CD4-positive, alpha-beta memory T cell (primary cell): ENCODE measurements at regions of chr11 and their contacts with region 1.

Region 1: GRCh38 chr11:123407130-123407995 is 22.7 kb upstream of the GRAMD1B start:
- DNase-seq: peak; percentile 60 to 72 (median 68)
- H3K4me3 ChIP-seq: no peak overlapping the region
- H3K4me3 Mint-ChIP-seq: peak overlapping the region in 1 of 8 donors; percentile 60
- H3K27ac ChIP-seq: no peak overlapping the region
- H3K27ac Mint-ChIP-seq: peak overlapping the region in 1 of 7 donors; percentile 43
- H3K4me1 ChIP-seq: no peaks in the 10 kb centered on the region
- H3K4me1 Mint-ChIP-seq: peaks cover 0 to 3% (median 0%) of the 10 kb centered on the region in 4 donors
- H3K27me3 ChIP-seq: no peaks in the 10 kb centered on the region
- H3K27me3 Mint-ChIP-seq: peaks cover 2 to 8% of the 10 kb centered on the region in 2 donors

Region 2: GRCh38 chr11:123391646-123392348 is 15.6 kb before region 1 on chr11:
- CTCF ChIA-PET with region 1: interaction called, 26 read pairs
- POLR2A ChIA-PET with region 1: no interaction called
- intact Hi-C with region 1: no loop called
- DNase-seq: no peak
- H3K4me3 ChIP-seq: no peak overlapping the region
- H3K4me3 Mint-ChIP-seq: no peak overlapping the region
- H3K27ac ChIP-seq: no peak overlapping the region
- H3K27ac Mint-ChIP-seq: peak overlapping the region in 2 of 7 donors; percentile 49 to 66
- H3K4me1 ChIP-seq: no peaks in the 10 kb centered on the region
- H3K4me1 Mint-ChIP-seq: no peaks in the 10 kb centered on the region
- H3K27me3 ChIP-seq: no peaks in the 10 kb centered on the region
- H3K27me3 Mint-ChIP-seq: peaks cover 0 to 3% of the 10 kb centered on the region in 2 donors

Region 3: GRCh38 chr11:123429913-123430720 is 22.8 kb after region 1 on chr11 and contains the start of gene GRAMD1B:
- CTCF ChIA-PET with region 1: interaction called, 172 read pairs
- POLR2A ChIA-PET with region 1: interaction called, 17 read pairs
- intact Hi-C with region 1: loop called (anchors 1 kb)
- DNase-seq: peak; percentile 79 to 84 (median 81)
- H3K4me3 ChIP-seq: peak within 1 kb of the TSS; percentile 69 to 84
- H3K4me3 Mint-ChIP-seq: peak within 1 kb of the TSS; percentile 90 to 98 (median 92)
- H3K27ac ChIP-seq: peak within 1 kb of the TSS; percentile 67
- H3K27ac Mint-ChIP-seq: peak within 1 kb of the TSS; percentile 86 to 96 (median 92)
- H3K4me1 ChIP-seq: peaks cover 24% of the 10 kb centered on the region
- H3K4me1 Mint-ChIP-seq: peaks cover 20 to 55% (median 35%) of the 10 kb centered on the region in 4 donors
- H3K27me3 ChIP-seq: no peaks in the 10 kb centered on the region
- H3K27me3 Mint-ChIP-seq: peaks cover 0 to 2% of the 10 kb centered on the region in 2 donors
- total RNA-seq, gene GRAMD1B: 19.5 to 26.0 TPM

Region 4: GRCh38 chr11:123478352-123478987 is 71.1 kb after region 1 on chr11:
- CTCF ChIA-PET with region 1: interaction called, 433 read pairs
- POLR2A ChIA-PET with region 1: interaction called, 20 read pairs
- intact Hi-C with region 1: loop called (anchors 1 kb)
- DNase-seq: peak in 4 of 5 donors; percentile 49 to 71 (median 56)
- H3K4me3 ChIP-seq: no peak overlapping the region
- H3K4me3 Mint-ChIP-seq: peak overlapping the region in 7 of 8 donors; percentile 49 to 79 (median 63)
- H3K27ac ChIP-seq: no peak overlapping the region
- H3K27ac Mint-ChIP-seq: peak overlapping the region in 4 of 7 donors; percentile 4 to 61 (median 56)
- H3K4me1 ChIP-seq: peaks cover 9% of the 10 kb centered on the region
- H3K4me1 Mint-ChIP-seq: peaks cover 6 to 14% (median 11%) of the 10 kb centered on the region in 4 donors
- H3K27me3 ChIP-seq: no peaks in the 10 kb centered on the region
- H3K27me3 Mint-ChIP-seq: no peaks in the 10 kb centered on the region

Region 5: DNA sequence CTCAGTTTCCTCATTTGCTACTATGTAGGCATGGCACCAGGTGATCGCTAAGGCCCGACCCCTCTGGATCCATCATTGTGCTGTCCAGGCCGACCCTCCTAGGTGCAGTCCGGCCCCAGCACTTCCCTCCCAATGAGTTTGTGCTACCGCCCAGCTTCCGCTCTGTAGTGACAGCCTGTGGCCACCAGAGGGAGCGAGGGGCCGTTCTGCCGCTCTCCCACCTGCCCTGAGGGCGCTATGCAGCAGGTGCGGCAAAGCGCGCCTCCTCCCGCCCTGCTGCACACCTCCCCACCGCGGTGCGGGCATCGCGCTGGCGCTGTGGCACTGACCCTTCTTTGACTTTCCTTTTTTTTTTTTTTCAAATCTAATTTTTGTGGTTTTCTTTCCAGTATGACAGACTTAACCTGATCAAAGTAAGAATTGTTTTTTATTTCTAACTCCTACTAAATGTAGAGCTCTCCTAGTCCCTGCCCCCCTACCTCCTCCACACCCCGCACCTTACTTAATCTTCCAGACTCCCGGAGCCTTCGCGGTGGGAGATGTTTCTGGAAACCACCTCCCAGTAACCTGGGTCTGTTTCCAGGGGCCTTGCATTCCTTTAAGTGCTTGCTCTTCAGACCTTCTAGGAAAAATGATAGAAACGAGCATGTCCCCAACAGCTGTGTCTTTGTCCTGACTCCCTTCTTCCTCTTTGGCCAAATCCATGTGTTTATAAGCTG is 173.4 kb after region 1 on chr11:
- CTCF ChIA-PET with region 1: interaction called, 11 read pairs
- POLR2A ChIA-PET with region 1: no interaction called
- intact Hi-C with region 1: loop called (anchors 2 kb)
- DNase-seq: peak; percentile 51 to 59 (median 57)
- H3K4me3 ChIP-seq: no peak overlapping the region
- H3K4me3 Mint-ChIP-seq: peak overlapping the region in 4 of 8 donors; percentile 26 to 46 (median 36)
- H3K27ac ChIP-seq: no peak overlapping the region
- H3K27ac Mint-ChIP-seq: peak overlapping the region in 1 of 7 donors; percentile 7
- H3K4me1 ChIP-seq: peaks cover 18% of the 10 kb centered on the region
- H3K4me1 Mint-ChIP-seq: peaks cover 13 to 29% (median 23%) of the 10 kb centered on the region in 4 donors
- H3K27me3 ChIP-seq: no peaks in the 10 kb centered on the region
- H3K27me3 Mint-ChIP-seq: no peaks in the 10 kb centered on the region